ENCODE measurements at regions of chr18 and their contacts with region 1.

Region 1: GRCh38 chr18:56468396-56468795 is 170.0 kb downstream of the TXNL1 start:
- H3K4me3 Mint-ChIP-seq: no peak overlapping the region
- H3K27ac Mint-ChIP-seq: peak overlapping the region; percentile 88
- H3K4me1 Mint-ChIP-seq: peaks cover 25% of the 10 kb centered on the region
- H3K27me3 Mint-ChIP-seq: no peaks in the 10 kb centered on the region

Region 2: DNA sequence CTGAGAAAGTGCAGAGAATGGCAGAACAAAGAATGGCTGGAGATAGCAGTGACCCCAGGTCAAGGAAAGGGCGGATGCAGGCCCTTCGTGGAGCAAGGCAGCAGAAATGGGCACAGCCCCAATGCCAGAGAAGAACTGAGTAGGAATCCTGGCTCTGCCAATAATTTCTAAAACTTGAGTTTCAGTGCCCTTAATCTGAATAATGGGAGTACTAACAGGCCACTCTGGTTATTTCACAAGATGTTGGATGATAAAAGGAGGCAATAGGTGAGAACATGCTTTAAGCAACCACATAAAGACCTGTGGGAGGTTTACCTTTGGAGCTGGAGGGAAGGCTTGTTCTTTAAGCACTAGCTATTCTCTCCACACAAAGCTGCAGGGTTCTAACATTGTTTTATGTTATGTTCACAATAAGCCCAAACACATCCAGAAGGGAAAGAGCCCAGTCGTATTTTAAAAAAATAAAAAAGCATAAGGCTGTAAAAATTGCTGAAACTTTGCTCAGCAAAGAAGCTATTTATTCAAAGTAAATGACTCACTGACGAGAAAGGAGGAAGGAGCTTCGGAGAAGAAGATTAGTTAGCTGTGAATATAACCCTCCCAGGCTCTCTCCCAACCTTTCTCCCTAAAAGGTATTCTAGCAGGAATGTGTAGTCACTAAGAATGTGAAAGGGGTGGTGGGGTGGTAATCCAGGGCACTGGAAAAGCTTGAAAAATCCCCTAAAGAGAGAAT is 300.2 kb before region 1 on chr18:
- intact Hi-C with region 1: no loop called
- H3K4me3 Mint-ChIP-seq: no peak overlapping the region
- H3K27ac Mint-ChIP-seq: no peak overlapping the region
- H3K4me1 Mint-ChIP-seq: peaks cover under 1% of the 10 kb centered on the region
- H3K27me3 Mint-ChIP-seq: no peaks in the 10 kb centered on the region

Region 3: GRCh38 chr18:56565551-56566345 is 97.4 kb after region 1 on chr18:
- intact Hi-C with region 1: loop called (anchors 5 kb)
- H3K4me3 Mint-ChIP-seq: no peak overlapping the region
- H3K27ac Mint-ChIP-seq: peak overlapping the region; percentile 85
- H3K4me1 Mint-ChIP-seq: peaks cover 53% of the 10 kb centered on the region
- H3K27me3 Mint-ChIP-seq: no peaks in the 10 kb centered on the region

Measured in dendritic cell treated with granulocyte-macrophage colony-stimulating factor and Interleukin-4, amounts not matched to agents 40 ng/mL and 50 ng/mL, for 4 days (primary cell).